PC-9 (cell line): ENCODE measurements at regions of chr1 and their contacts with region 1.

Region 1: DNA sequence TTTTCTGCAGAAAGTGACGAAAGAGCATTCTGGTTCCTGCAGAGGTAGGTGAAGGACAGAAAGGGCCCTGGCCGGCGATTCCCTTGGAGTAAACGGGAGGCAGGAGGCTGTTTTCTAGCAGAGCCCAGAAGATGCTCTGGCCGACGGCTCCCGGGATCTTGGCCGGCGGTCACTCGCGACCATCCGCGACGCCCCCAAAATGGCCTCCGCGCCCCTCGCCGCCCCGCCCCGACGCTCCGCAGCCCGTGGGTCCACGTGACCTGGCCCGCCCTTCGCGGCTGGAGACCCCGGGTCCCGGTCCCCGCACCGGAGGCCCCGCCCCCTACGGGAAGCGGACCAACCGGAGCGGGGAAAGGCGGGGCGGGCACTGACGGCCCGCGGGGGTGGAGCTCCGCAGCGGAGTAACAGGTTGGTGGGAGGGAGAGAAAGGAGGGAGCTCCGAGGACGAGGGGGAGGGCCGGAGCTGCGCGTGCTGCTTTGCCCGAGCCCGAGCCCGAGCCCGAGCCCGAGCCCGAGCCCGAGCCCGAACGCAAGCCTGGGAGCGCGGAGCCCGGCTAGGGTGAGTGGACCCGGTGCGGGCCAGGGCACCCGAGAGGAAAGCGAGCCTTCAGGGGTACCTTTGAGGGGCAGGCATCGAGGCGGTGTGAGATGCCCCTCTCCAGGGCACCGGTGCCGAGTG is at the start of gene CGN:
- DNase-seq: peak; percentile 75 to 89
- H3K4me3 ChIP-seq: peak within 1 kb of the TSS; percentile 62
- H3K27ac ChIP-seq: peak within 1 kb of the TSS; percentile 96
- H3K4me1 ChIP-seq: peaks cover 57% of the 10 kb centered on the region
- H3K27me3 ChIP-seq: no peaks in the 10 kb centered on the region
- CTCF ChIP-seq: no peak
- total RNA-seq, gene CGN: 30.3 and 31.1 TPM in 2 replicates

Region 2: DNA sequence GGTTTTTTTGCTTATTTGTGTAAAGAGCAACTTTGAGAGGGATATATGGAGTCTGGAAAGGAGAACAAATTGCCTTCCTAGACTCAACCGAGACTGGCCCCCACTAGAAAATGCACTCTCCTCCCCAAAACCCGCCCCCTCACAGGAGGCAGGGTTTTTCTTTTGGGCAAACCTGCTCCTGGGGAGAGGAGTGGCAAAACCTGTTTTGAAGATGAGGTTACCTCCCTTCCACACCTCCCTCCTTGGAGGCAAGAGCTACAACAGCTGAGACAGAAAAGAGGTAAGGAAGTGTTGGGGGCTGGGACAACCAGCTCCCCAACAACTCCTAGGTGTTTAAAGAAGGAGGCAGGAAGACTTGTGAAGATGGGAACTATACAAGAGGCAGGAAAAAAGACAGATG is 474.7 kb before region 1 on chr1 and contains the start of gene BNIPL:
- CTCF ChIA-PET with region 1: no interaction called
- POLR2A ChIA-PET with region 1: no interaction called
- intact Hi-C with region 1: no loop called
- DNase-seq: peak; percentile 41 to 53
- H3K4me3 ChIP-seq: no peak within 1 kb of the TSS
- H3K27ac ChIP-seq: no peak within 1 kb of the TSS
- H3K4me1 ChIP-seq: peaks cover 12% of the 10 kb centered on the region
- H3K27me3 ChIP-seq: no peaks in the 10 kb centered on the region
- CTCF ChIP-seq: no peak
- total RNA-seq, gene BNIPL: 3.0 and 3.6 TPM in 2 replicates

Region 3: GRCh38 chr1:151459331-151460046 is 51.6 kb before region 1 on chr1 and contains the start of gene POGZ:
- CTCF ChIA-PET with region 1: no interaction called
- POLR2A ChIA-PET with region 1: interaction called, 7 read pairs
- intact Hi-C with region 1: loop called (anchors 1 kb)
- DNase-seq: peak; percentile 79 to 90
- H3K4me3 ChIP-seq: peak within 1 kb of the TSS; percentile 80
- H3K27ac ChIP-seq: peak within 1 kb of the TSS; percentile 72
- H3K4me1 ChIP-seq: peaks cover 17% of the 10 kb centered on the region
- H3K27me3 ChIP-seq: no peaks in the 10 kb centered on the region
- CTCF ChIP-seq: no peak
- total RNA-seq, gene POGZ: 63.3 and 71.0 TPM in 2 replicates

Region 4: DNA sequence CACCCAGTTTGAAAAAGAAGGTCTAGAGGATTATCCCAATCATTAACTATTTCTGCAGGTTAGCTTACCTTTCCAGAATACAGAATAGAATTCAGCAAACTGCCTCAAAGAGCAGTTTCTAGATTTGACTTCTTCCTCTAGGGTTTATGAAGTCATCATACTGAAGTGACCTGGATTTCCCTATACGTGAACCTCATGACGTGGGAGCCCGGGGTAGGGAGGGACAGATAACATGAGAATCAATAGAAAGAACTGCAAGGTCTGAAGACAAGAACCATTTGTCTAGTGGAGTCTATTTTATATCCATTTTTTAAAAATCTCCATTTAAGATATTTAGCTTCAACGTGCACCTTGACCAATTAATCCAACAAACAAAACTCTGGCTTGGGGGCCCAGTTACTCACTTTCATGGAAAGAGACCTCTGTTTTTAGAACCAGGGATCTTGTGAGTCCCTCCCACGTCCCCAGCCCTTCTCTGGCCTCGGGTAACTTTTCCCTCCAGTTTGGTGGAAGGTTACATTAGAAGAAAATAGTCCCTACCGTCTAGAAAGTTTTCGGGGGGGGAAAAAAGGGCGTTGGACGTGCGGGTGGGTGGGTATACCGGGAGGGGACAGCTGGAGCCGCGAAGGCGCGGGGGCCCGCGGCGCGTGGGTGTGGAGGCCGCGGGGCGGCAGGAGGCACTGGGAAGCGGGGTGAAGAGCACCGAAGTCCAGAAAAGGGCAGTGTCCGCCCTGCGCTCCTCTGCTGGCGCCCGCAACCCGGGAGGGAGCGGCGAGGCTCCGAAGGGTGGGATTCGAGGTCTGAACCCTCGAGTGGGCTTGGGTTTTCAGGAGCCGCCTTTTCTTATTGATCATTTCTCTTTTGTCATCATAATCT is 38.0 kb before region 1 on chr1:
- CTCF ChIA-PET with region 1: interaction called, 8 read pairs
- POLR2A ChIA-PET with region 1: interaction called, 10 read pairs
- intact Hi-C with region 1: loop called (anchors 1 kb)
- DNase-seq: peak; percentile 30 to 38
- H3K4me3 ChIP-seq: peak overlapping the region; percentile 60
- H3K27ac ChIP-seq: no peak overlapping the region
- H3K4me1 ChIP-seq: peaks cover 11% of the 10 kb centered on the region; the same call in 1 of the 2 replicates
- H3K27me3 ChIP-seq: no peaks in the 10 kb centered on the region
- CTCF ChIP-seq: no peak

Region 5: DNA sequence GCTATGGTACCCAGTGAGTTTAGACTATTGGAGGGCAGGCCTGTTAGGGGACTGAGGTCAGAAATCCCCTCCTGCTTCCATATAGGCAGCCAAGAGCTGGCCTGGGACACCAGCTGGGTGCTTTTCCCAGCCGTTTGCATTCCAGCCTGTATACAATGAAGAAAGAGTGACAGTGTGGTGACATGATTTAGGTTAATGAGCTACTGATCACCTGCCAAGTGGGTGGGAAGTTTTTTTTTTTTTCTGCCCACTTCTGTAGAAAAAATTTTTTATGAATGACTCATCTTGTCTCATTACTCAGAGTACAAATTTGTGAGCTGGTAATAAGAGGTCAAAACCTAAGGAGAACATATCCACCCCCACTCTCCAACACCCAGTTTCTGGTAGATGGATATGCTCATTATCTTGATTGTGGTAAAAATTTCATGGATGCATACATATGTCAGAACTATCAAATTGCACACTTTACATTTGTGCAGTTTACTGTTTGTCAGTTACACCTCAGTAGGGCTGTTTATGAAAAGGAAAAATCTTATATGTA is 16.3 kb before region 1 on chr1:
- CTCF ChIA-PET with region 1: interaction called, 4 read pairs
- POLR2A ChIA-PET with region 1: no interaction called
- intact Hi-C with region 1: loop called (anchors 1 kb)
- DNase-seq: peak; percentile 64 to 92
- H3K4me3 ChIP-seq: no peak overlapping the region
- H3K27ac ChIP-seq: peak overlapping the region; percentile 73
- H3K4me1 ChIP-seq: peaks cover 25% of the 10 kb centered on the region
- H3K27me3 ChIP-seq: no peaks in the 10 kb centered on the region
- CTCF ChIP-seq: no peak

Region 6: DNA sequence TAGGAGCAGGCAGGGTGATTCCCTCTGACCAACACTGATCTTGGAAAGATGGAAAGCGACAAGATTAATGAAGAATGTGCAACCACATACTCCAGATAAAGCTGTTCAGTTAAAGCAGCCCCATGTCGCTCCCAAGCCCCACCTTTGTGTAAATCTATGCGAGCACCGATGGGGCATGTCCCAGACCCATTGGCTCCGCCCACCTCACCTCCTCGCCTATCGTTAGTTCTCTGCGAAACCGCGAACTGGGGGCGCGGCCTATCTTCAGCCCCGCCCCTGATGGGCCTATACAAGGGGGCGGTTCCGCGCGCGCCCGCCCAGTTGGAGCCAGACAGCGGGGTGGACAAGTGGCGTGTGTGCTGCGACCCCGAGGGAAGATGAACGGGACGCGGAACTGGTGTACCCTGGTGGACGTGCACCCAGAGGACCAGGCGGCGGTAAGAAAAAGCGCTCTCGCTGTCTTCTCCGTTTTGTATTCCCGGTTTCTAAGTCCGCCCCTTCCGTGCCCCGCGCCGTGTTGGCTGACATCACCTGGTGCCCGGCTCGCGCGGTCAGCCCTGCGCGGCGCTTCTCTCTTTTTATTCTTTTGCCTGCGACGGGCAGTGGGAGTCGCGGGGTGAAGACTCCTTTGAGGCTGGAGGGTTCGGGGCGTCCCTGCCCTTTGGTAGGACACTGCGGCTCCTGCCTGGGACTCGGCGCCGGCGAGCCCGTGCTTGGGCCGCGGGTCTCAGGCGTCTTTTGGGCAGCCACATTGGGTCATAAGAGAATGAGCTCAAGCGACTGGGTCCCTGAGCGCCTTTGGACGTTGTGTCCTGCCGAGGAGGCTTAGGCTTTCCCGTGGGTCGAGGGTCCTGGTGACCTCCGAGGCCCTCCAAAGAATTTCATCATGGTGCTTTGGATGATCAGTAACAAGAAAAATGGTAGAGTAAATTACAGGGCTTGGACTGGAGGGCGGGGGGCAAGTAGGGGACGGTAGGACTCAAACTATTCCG is 29.2 kb after region 1 on chr1 and contains the start of gene TUFT1:
- CTCF ChIA-PET with region 1: interaction called, 4 read pairs
- POLR2A ChIA-PET with region 1: interaction called, 12 read pairs
- intact Hi-C with region 1: loop called (anchors 1 kb)
- DNase-seq: peak; percentile 85 to 95
- H3K4me3 ChIP-seq: peak within 1 kb of the TSS; percentile 92
- H3K27ac ChIP-seq: peak within 1 kb of the TSS; percentile 95
- H3K4me1 ChIP-seq: peaks cover 60% of the 10 kb centered on the region
- H3K27me3 ChIP-seq: no peaks in the 10 kb centered on the region
- CTCF ChIP-seq: no peak
- total RNA-seq, gene TUFT1: 35.3 and 40.2 TPM in 2 replicates

Region 7: GRCh38 chr1:151547119-151547899 is 36.2 kb after region 1 on chr1:
- CTCF ChIA-PET with region 1: no interaction called
- POLR2A ChIA-PET with region 1: interaction called, 12 read pairs
- intact Hi-C with region 1: loop called (anchors 1 kb)
- DNase-seq: peak; percentile 92 to 99
- H3K4me3 ChIP-seq: peak overlapping the region; percentile 24; the same call in 1 of the 2 replicates
- H3K27ac ChIP-seq: peak overlapping the region; percentile 99
- H3K4me1 ChIP-seq: peaks cover 87% of the 10 kb centered on the region
- H3K27me3 ChIP-seq: no peaks in the 10 kb centered on the region
- CTCF ChIP-seq: no peak; the same call in 1 of the 2 replicates